Naive thymus-derived CD4-positive, alpha-beta T cell (primary cell): ENCODE measurements at regions of chr3 and their contacts with region 1.

Region 1: DNA sequence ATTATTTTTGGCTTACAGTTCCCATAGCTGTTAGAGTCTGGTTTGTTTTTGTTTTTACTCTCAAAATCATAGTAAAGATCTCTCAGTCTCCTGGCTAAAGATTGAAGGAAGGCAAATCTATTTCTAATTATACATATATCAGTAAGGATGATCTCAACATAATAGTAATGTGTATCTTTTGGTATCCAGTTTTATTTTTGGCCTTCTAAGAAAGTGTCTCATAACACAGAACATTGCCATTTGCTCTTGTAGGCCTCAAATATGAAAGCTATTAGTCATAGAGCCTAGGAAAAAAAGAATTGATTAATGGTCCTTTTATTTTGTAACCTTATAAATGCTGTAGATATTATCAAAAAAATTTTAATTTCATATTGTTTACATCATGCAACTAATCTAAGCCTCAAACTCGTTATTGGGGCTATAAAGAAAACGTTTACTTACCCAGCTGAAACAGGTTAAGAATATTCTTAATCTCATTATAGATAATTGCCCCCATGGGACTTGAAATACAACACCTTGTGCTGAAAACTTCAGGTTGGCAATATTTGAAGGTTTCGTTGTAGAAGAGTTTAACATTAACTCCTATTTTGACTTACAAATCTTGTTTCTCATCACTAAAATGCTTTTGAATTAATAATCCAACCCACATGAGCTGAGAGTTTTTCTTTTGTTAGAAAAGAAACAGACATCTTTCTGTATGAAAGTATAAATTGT is 16.7 kb downstream of the FBXO45 start:
- DNase-seq: no peak
- ATAC-seq: no peak
- H3K4me3 ChIP-seq: no peak overlapping the region
- H3K4me3 Mint-ChIP-seq: no peak overlapping the region
- H3K27ac ChIP-seq: no peak overlapping the region
- H3K27ac Mint-ChIP-seq: no peak overlapping the region
- H3K4me1 ChIP-seq: no peaks in the 10 kb centered on the region
- H3K4me1 Mint-ChIP-seq: peaks cover 0 to 13% (median 0%) of the 10 kb centered on the region in 7 donors
- H3K27me3 ChIP-seq: no peaks in the 10 kb centered on the region
- H3K27me3 Mint-ChIP-seq: no peaks in the 10 kb centered on the region

Region 2: GRCh38 chr3:196596355-196596754 is 11.2 kb after region 1 on chr3:
- CTCF ChIA-PET with region 1: no interaction called
- POLR2A ChIA-PET with region 1: interaction called, 12 read pairs
- intact Hi-C with region 1: no loop called
- DNase-seq: no peak
- ATAC-seq: no peak
- H3K4me3 ChIP-seq: no peak overlapping the region
- H3K4me3 Mint-ChIP-seq: no peak overlapping the region
- H3K27ac ChIP-seq: no peak overlapping the region
- H3K27ac Mint-ChIP-seq: peak overlapping the region in 1 of 9 donors; percentile 20
- H3K4me1 ChIP-seq: no peaks in the 10 kb centered on the region
- H3K4me1 Mint-ChIP-seq: peaks cover 0 to 15% (median 9%) of the 10 kb centered on the region in 7 donors
- H3K27me3 ChIP-seq: no peaks in the 10 kb centered on the region
- H3K27me3 Mint-ChIP-seq: peaks cover 0 to 33% (median 6%) of the 10 kb centered on the region in 5 donors